Ovary (tissue), 10 donors: ENCODE measurements at regions of chr2 and their contacts with region 1.

Region 1: DNA sequence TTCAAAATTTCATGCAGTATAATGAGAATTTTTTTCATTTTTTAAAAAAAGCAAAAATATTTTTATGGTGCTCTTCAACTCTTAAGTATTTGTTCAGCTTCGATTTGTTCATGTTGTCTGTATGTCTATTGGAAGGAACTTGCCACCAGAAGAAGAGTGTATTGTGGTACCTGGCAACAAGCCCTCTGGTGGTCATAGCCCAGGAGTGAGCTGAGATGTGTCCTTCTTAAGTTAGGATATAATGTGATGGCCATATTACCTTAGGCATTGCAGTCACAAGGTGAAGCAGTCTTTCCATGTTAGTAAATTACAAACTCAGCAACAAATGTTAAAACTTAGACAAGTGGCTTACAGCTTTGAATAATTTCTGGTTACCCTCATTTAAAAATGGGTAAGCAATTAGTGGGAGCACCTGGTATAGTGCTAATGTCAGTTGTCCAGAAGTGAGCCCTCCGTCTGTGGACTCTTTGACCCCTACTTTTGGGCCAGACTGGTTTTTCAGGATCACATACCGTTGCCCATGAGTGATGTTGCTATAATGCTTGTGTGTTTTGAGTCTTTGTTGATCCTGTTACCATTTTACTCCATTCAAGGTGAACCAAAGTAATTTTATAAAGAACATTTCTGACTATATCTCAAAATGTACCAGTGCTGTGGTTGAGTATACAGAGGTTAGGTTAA is 57.4 kb downstream of the MYO1B start:
- DNase-seq: no peak
- H3K4me3 ChIP-seq: no peak overlapping the region
- H3K27ac ChIP-seq: peak overlapping the region in 1 of 2 donors; percentile 1
- H3K4me1 ChIP-seq: peaks cover 17% of the 10 kb centered on the region
- H3K27me3 ChIP-seq: no peaks in the 10 kb centered on the region
- CTCF ChIP-seq: no peak
- EP300 ChIP-seq: no peak
- POLR2A ChIP-seq: no peak

Region 2: GRCh38 chr2:189698020-189698887 is 1604.3 kb before region 1 on chr2:
- intact Hi-C with region 1: no loop called
- DNase-seq: peak in 2 of 5 donors; percentile 32 to 60
- H3K4me3 ChIP-seq: no peak overlapping the region
- H3K27ac ChIP-seq: no peak overlapping the region
- H3K4me1 ChIP-seq: no peaks in the 10 kb centered on the region
- H3K27me3 ChIP-seq: no peaks in the 10 kb centered on the region
- CTCF ChIP-seq: peak in 1 of 3 donors; percentile 43
- EP300 ChIP-seq: no peak
- POLR2A ChIP-seq: no peak

Region 3: GRCh38 chr2:191165176-191165643 is 137.4 kb before region 1 on chr2:
- intact Hi-C with region 1: no loop called
- DNase-seq: no peak
- H3K4me3 ChIP-seq: no peak overlapping the region
- H3K27ac ChIP-seq: no peak overlapping the region
- H3K4me1 ChIP-seq: peaks cover 1% of the 10 kb centered on the region
- H3K27me3 ChIP-seq: no peaks in the 10 kb centered on the region
- CTCF ChIP-seq: peak; percentile 19 to 38 (median 37)
- EP300 ChIP-seq: no peak
- POLR2A ChIP-seq: no peak

Region 4: GRCh38 chr2:191206613-191207481 is 95.8 kb before region 1 on chr2:
- intact Hi-C with region 1: no loop called
- DNase-seq: no peak
- H3K4me3 ChIP-seq: no peak overlapping the region
- H3K27ac ChIP-seq: no peak overlapping the region
- H3K4me1 ChIP-seq: no peaks in the 10 kb centered on the region
- H3K27me3 ChIP-seq: no peaks in the 10 kb centered on the region
- CTCF ChIP-seq: no peak
- EP300 ChIP-seq: no peak
- POLR2A ChIP-seq: no peak

Region 5: GRCh38 chr2:191245046-191245868 is 57.3 kb before region 1 on chr2 and contains the start of gene MYO1B:
- intact Hi-C with region 1: loop called in 1 of 4 experiments (anchors 10 kb)
- DNase-seq: peak; percentile 62 to 83 (median 75)
- H3K4me3 ChIP-seq: peak within 1 kb of the TSS; percentile 47
- H3K27ac ChIP-seq: peak within 1 kb of the TSS; percentile 17 to 59
- H3K4me1 ChIP-seq: peaks cover 10% of the 10 kb centered on the region
- H3K27me3 ChIP-seq: no peaks in the 10 kb centered on the region
- CTCF ChIP-seq: peak; percentile 17 to 60 (median 21)
- EP300 ChIP-seq: no peak
- POLR2A ChIP-seq: no peak
- total RNA-seq, gene MYO1B: 17.6 to 34.7 (median 27.3) TPM